Aorta (tissue), 5 donors: ENCODE measurements at regions of chr19 and their contacts with region 1.

Region 1: GRCh38 chr19:34428549-34429285 is 536 bp downstream of the UBA2 start:
- DNase-seq: peak; percentile 60 to 85
- ATAC-seq: peak; percentile 72
- H3K4me3 ChIP-seq: peak overlapping the region; percentile 83 to 94
- H3K27ac ChIP-seq: peak overlapping the region; percentile 72 to 94
- H3K4me1 ChIP-seq: peaks cover under 1 to 2% of the 10 kb centered on the region in 2 donors
- H3K27me3 ChIP-seq: peaks cover 0 to 2% of the 10 kb centered on the region in 2 donors

Region 2: GRCh38 chr19:34359140-34359953 is 69.4 kb before region 1 on chr19:
- intact Hi-C with region 1: loop called in 1 of 2 experiments (anchors 5 kb)
- DNase-seq: peak; percentile 98 to 99
- ATAC-seq: peak; percentile 97
- H3K4me3 ChIP-seq: peak overlapping the region; percentile 4 to 7
- H3K27ac ChIP-seq: peak overlapping the region in 1 of 2 donors; percentile 37
- H3K4me1 ChIP-seq: no peaks in the 10 kb centered on the region
- H3K27me3 ChIP-seq: no peaks in the 10 kb centered on the region

Region 3: GRCh38 chr19:34480971-34481821 is 52.5 kb after region 1 on chr19 and contains the start of gene WTIP:
- intact Hi-C with region 1: loop called (anchors 5 kb)
- DNase-seq: peak; percentile 88 to 95
- ATAC-seq: peak; percentile 91
- H3K4me3 ChIP-seq: peak within 1 kb of the TSS; percentile 95 to 98
- H3K27ac ChIP-seq: peak within 1 kb of the TSS; percentile 85 to 90
- H3K4me1 ChIP-seq: no peaks in the 10 kb centered on the region
- H3K27me3 ChIP-seq: no peaks in the 10 kb centered on the region
- total RNA-seq, gene WTIP: 74.0 to 89.3 TPM